T-cell (primary cell): ENCODE measurements at regions of chr20 and their contacts with region 1.

Region 1: GRCh38 chr20:44609511-44610312 is 27.3 kb downstream of the PKIG start:
- DNase-seq: peak; percentile 50 to 91 (median 79)
- ATAC-seq: peak; percentile 78 to 92 (median 86)
- H3K4me3 ChIP-seq: peak overlapping the region in 1 of 2 donors; percentile 4
- H3K4me3 Mint-ChIP-seq: peak overlapping the region in 2 of 3 donors; percentile 44 to 59
- H3K27ac ChIP-seq: peak overlapping the region; percentile 77
- H3K27ac Mint-ChIP-seq: peak overlapping the region; percentile 91 to 98
- H3K4me1 ChIP-seq: peaks cover 19 to 34% of the 10 kb centered on the region in 2 experiments
- H3K4me1 Mint-ChIP-seq: peaks cover 32 to 35% (median 32%) of the 10 kb centered on the region in 3 donors
- H3K27me3 ChIP-seq: no peaks in the 10 kb centered on the region
- H3K27me3 Mint-ChIP-seq: no peaks in the 10 kb centered on the region

Region 2: GRCh38 chr20:44644667-44645131 is 35.0 kb after region 1 on chr20:
- CTCF ChIA-PET with region 1: interaction called in 1 of 2 experiments, 6 read pairs
- POLR2A ChIA-PET with region 1: interaction called in 1 of 2 experiments, 12 read pairs
- DNase-seq: peak in 32 of 35 experiments; percentile 16 to 85 (median 46)
- ATAC-seq: peak; percentile 32 to 73 (median 42)
- H3K4me3 ChIP-seq: peak overlapping the region in 1 of 2 donors; percentile 41
- H3K4me3 Mint-ChIP-seq: peak overlapping the region; percentile 40 to 86 (median 46)
- H3K27ac ChIP-seq: peak overlapping the region; percentile 91
- H3K27ac Mint-ChIP-seq: peak overlapping the region; percentile 94 to 99
- H3K4me1 ChIP-seq: peaks cover 60 to 95% of the 10 kb centered on the region in 2 experiments
- H3K4me1 Mint-ChIP-seq: peaks cover 80 to 92% (median 91%) of the 10 kb centered on the region in 3 donors
- H3K27me3 ChIP-seq: no peaks in the 10 kb centered on the region
- H3K27me3 Mint-ChIP-seq: no peaks in the 10 kb centered on the region

Region 3: DNA sequence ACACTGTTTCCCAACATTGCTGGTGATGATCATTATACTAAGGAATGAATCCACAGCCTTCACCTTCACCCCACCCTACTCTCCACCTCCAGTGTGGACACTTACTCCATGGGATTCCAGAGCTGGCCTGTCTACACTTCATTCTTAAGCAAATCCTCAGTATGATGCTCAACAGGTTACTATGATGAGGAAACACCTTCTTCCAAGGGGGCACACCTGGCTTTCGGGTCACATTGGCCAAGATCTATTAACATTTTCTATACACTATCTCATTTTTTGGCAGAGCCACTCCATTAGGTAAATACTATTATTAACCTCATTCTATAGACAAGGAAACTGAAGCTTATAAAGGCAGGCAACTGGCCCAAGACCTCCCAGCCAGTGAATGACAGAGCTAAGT is 945.5 kb after region 1 on chr20:
- CTCF ChIA-PET with region 1: no interaction called
- POLR2A ChIA-PET with region 1: no interaction called
- DNase-seq: no peak
- ATAC-seq: no peak
- H3K4me3 ChIP-seq: no peak overlapping the region
- H3K4me3 Mint-ChIP-seq: no peak overlapping the region
- H3K27ac ChIP-seq: no peak overlapping the region
- H3K27ac Mint-ChIP-seq: no peak overlapping the region
- H3K4me1 ChIP-seq: no peaks in the 10 kb centered on the region
- H3K4me1 Mint-ChIP-seq: no peaks in the 10 kb centered on the region
- H3K27me3 ChIP-seq: peaks cover 0 to 4% of the 10 kb centered on the region in 2 experiments
- H3K27me3 Mint-ChIP-seq: peaks cover 26 to 27% of the 10 kb centered on the region in 2 donors